T-cell (primary cell): ENCODE measurements at regions of chr13 and their contacts with region 1.

Region 1: DNA sequence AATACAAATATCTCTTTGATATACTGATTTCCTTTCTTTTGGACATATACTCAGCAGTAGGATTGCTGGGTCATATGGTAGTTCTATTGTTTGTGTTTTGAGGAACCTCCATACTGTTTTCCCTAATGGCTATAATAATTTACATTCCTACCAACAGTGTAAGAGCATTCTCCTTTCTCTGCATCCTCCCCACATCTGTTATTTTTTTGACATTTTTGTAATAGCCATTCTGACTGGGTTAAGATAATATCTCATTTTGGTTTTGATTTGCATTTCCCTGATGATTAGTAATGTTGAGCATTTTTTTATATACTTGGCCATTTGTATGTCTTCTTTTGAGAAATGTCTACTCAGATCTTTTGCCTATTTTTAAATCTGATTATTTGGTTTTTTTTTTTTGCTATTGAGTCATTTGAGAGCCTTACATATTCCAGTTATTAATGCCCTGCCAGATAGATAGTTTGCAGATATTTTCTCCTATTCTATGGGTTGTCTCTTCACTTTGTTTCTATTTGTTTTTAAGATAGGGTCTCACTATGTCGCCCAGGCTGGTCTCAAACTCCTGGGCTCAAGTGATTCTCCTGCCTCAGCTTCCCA is 95.7 kb downstream of the FNDC3A start:
- DNase-seq: no peak
- ATAC-seq: no peak
- H3K4me3 ChIP-seq: no peak overlapping the region
- H3K4me3 Mint-ChIP-seq: no peak overlapping the region
- H3K27ac ChIP-seq: no peak overlapping the region
- H3K27ac Mint-ChIP-seq: no peak overlapping the region
- H3K4me1 ChIP-seq: no peaks in the 10 kb centered on the region
- H3K4me1 Mint-ChIP-seq: peaks cover 4 to 13% (median 11%) of the 10 kb centered on the region in 3 donors
- H3K27me3 ChIP-seq: no peaks in the 10 kb centered on the region
- H3K27me3 Mint-ChIP-seq: no peaks in the 10 kb centered on the region

Region 2: GRCh38 chr13:49110122-49110912 is 38.9 kb after region 1 on chr13:
- CTCF ChIA-PET with region 1: no interaction called
- POLR2A ChIA-PET with region 1: interaction called in 1 of 2 experiments, 11 read pairs
- DNase-seq: peak; percentile 47 to 90 (median 66)
- ATAC-seq: peak; percentile 51 to 87 (median 70)
- H3K4me3 ChIP-seq: peak overlapping the region; percentile 59 to 84
- H3K4me3 Mint-ChIP-seq: peak overlapping the region; percentile 83 to 93 (median 92)
- H3K27ac ChIP-seq: peak overlapping the region; percentile 35
- H3K27ac Mint-ChIP-seq: peak overlapping the region; percentile 85 to 91
- H3K4me1 ChIP-seq: peaks cover 10 to 22% of the 10 kb centered on the region in 2 experiments
- H3K4me1 Mint-ChIP-seq: peaks cover 31 to 45% (median 42%) of the 10 kb centered on the region in 3 donors
- H3K27me3 ChIP-seq: no peaks in the 10 kb centered on the region
- H3K27me3 Mint-ChIP-seq: no peaks in the 10 kb centered on the region

Region 3: GRCh38 chr13:49517461-49517860 is 446.0 kb after region 1 on chr13:
- CTCF ChIA-PET with region 1: no interaction called
- POLR2A ChIA-PET with region 1: no interaction called
- DNase-seq: peak in 1 of 35 experiments; percentile 13
- ATAC-seq: no peak
- H3K4me3 ChIP-seq: no peak overlapping the region
- H3K4me3 Mint-ChIP-seq: no peak overlapping the region
- H3K27ac ChIP-seq: no peak overlapping the region
- H3K27ac Mint-ChIP-seq: no peak overlapping the region
- H3K4me1 ChIP-seq: no peaks in the 10 kb centered on the region
- H3K4me1 Mint-ChIP-seq: peaks cover 4 to 23% (median 16%) of the 10 kb centered on the region in 3 donors
- H3K27me3 ChIP-seq: no peaks in the 10 kb centered on the region
- H3K27me3 Mint-ChIP-seq: no peaks in the 10 kb centered on the region